ENCODE measurements at regions of chr15 and their contacts with region 1.

Region 1: DNA sequence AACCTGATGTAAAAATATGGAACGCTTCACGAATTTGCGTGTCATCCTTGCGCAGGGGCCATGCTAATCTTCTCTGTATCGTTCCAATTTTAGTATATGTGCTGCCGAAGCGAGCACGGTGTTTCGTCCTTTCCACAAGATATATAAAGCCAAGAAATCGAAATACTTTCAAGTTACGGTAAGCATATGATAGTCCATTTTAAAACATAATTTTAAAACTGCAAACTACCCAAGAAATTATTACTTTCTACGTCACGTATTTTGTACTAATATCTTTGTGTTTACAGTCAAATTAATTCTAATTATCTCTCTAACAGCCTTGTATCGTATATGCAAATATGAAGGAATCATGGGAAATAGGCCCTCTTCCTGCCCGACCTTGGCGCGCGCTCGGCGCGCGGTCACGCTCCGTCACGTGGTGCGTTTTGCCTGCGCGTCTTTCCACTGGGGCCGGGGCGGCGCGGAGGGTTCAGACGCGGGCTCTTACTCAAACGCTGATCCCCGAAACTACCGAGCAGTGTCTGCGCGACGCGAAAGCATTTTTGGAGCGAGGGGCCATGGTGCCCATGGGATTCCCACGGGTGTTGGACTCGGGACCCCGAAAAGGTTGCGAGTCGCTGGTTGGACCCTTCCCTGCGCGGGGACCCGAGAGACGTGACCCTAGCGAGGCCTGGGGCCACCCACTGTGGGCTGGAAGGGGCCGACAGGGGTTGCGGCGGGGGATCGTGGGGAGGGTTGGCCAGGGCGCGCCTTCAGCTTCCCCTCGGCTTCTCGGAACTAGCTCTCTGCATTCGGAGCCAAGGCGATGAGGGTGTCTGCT is at the start of gene RNU6-1:
- DNase-seq: peak; percentile 96
- ATAC-seq: peak; percentile 95
- total RNA-seq, gene RNU6-1: not detected

Region 2: GRCh38 chr15:67456677-67457529 is 383.2 kb before region 1 on chr15:
- intact Hi-C with region 1: loop called (anchors 5 kb)
- DNase-seq: peak; percentile 90
- ATAC-seq: peak; percentile 86

Region 3: GRCh38 chr15:67784090-67784781 is 55.9 kb before region 1 on chr15:
- intact Hi-C with region 1: no loop called
- DNase-seq: no peak
- ATAC-seq: no peak